ENCODE measurements at regions of chr5 and their contacts with region 1.

Region 1: GRCh38 chr5:146203011-146203871 is at the start of gene RBM27:
- DNase-seq: peak; percentile 97
- H3K4me3 Mint-ChIP-seq: no peak within 1 kb of the TSS
- H3K27ac Mint-ChIP-seq: no peak within 1 kb of the TSS
- H3K4me1 Mint-ChIP-seq: peaks cover 15% of the 10 kb centered on the region
- H3K27me3 Mint-ChIP-seq: no peaks in the 10 kb centered on the region
- total RNA-seq, gene RBM27: 14.8 to 18.3 TPM

Region 2: DNA sequence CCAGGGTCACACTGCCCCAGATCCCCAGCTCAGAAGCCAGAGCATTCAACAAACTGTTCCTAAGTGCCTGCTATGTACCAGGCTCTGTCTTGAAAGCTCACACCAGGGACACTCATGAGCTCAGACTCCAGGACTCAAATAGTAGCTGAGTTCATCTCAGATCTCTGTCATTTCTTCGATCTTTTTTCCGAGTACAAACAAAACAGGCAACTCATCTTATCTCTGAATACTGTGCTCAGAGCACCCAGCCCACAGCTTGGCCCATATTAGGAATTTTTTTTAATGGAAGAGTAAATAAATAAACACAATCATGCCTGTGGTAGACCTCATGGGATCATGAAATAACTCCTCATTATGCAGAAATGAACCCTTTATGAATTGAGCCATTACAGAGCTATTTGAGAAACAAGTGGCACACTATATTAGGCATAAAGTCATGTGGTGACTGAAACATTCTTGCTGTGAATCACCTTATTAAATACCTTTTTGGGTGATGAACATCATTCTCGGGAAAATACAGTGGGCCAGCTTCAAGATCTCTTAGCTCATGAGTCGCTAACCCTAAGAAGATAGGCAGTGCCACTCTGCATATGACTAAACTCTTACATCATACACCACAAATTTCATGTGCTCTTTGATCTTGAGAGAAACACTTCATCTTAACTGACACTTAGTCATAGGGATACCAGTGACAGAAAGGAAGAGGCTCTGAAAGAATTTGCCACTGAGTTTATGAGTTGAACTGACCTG is 257.0 kb before region 1 on chr5:
- CTCF ChIA-PET with region 1: no interaction called
- intact Hi-C with region 1: loop called (anchors 1 kb)
- DNase-seq: peak; percentile 37
- H3K4me3 Mint-ChIP-seq: no peak overlapping the region
- H3K27ac Mint-ChIP-seq: no peak overlapping the region
- H3K4me1 Mint-ChIP-seq: peaks cover 13% of the 10 kb centered on the region
- H3K27me3 Mint-ChIP-seq: peaks cover 33% of the 10 kb centered on the region

Region 3: DNA sequence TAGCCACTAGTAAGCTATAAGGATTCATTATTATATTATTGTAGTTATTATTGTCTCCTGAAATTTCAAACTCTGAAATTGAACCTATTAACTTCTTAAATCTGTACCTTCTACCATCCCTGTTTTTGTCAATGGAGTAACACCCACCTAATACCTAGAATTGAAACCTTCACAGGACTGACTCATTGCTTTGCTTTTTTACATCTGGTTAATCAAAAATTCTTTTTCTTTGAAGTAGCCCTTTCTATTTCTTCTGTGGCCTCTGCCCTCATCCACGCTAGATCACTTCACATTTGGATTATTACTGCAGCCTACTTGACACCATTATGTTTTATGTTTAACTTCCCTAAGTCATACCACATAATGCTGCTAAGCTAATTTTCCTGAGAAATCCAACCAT is 35.7 kb after region 1 on chr5:
- CTCF ChIA-PET with region 1: interaction called, 3 read pairs
- intact Hi-C with region 1: loop called (anchors 1 kb)
- DNase-seq: peak; percentile 11
- H3K4me3 Mint-ChIP-seq: no peak overlapping the region
- H3K27ac Mint-ChIP-seq: no peak overlapping the region
- H3K4me1 Mint-ChIP-seq: peaks cover 8% of the 10 kb centered on the region
- H3K27me3 Mint-ChIP-seq: no peaks in the 10 kb centered on the region

Measured in activated naive CD4-positive, alpha-beta T cell treated with anti-CD3 and anti-CD28 coated beads for 36 hours (primary cell).